HepG2 (cell line): ENCODE measurements at regions of chr16 and their contacts with region 1.

Region 1: GRCh38 chr16:69186642-69187445 is at the start of gene SNTB2:
- DNase-seq: peak; percentile 92
- ATAC-seq: peak; percentile 94
- H3K4me3 ChIP-seq: peak within 1 kb of the TSS; percentile 73 to 94 (median 88)
- H3K27ac ChIP-seq: peak within 1 kb of the TSS; percentile 71
- H3K4me1 ChIP-seq: peaks cover 49% of the 10 kb centered on the region
- H3K27me3 ChIP-seq: no peaks in the 10 kb centered on the region; a peak in 1 of 5 replicates
- CTCF ChIP-seq: no peak
- EP300 ChIP-seq: 0 out of 4 replicates have a peak, but pooled peaks of 1 of the 2 experiments have one; percentile 28
- POLR2A ChIP-seq: peak; percentile 89 to 96
- RAD21 ChIP-seq: peak; percentile 30; the same call in 1 of the 2 replicates
- total RNA-seq, gene SNTB2: 19.2 and 22.9 TPM in 2 replicates

Region 2: GRCh38 chr16:69132424-69133252 is 54.2 kb before region 1 on chr16 and contains the starts of genes CHTF8 and UTP4:
- CTCF ChIA-PET with region 1: no interaction called
- POLR2A ChIA-PET with region 1: interaction called, 11 read pairs
- in situ Hi-C with region 1: no loop called
- intact Hi-C with region 1: no loop called
- DNase-seq: peak; percentile 79
- ATAC-seq: peak; percentile 95
- H3K4me3 ChIP-seq: peak within 1 kb of the TSS; percentile 87 to 98 (median 91)
- H3K27ac ChIP-seq: peak within 1 kb of the TSS; percentile 97
- H3K4me1 ChIP-seq: peaks cover 50% of the 10 kb centered on the region
- H3K27me3 ChIP-seq: no peaks in the 10 kb centered on the region; a peak in 1 of 5 replicates
- CTCF ChIP-seq: no peak; the same call in 1 of the 2 replicates
- EP300 ChIP-seq: no peak; a peak in 2 of 4 replicates
- POLR2A ChIP-seq: peak in 1 of 2 experiments; percentile 94; a peak in 3 of 4 replicates
- RAD21 ChIP-seq: no peak; the same call in 1 of the 2 replicates
- total RNA-seq, gene CHTF8: 37.2 and 64.1 TPM in 2 replicates
- total RNA-seq, gene UTP4: 30.0 and 57.1 TPM in 2 replicates

Region 3: DNA sequence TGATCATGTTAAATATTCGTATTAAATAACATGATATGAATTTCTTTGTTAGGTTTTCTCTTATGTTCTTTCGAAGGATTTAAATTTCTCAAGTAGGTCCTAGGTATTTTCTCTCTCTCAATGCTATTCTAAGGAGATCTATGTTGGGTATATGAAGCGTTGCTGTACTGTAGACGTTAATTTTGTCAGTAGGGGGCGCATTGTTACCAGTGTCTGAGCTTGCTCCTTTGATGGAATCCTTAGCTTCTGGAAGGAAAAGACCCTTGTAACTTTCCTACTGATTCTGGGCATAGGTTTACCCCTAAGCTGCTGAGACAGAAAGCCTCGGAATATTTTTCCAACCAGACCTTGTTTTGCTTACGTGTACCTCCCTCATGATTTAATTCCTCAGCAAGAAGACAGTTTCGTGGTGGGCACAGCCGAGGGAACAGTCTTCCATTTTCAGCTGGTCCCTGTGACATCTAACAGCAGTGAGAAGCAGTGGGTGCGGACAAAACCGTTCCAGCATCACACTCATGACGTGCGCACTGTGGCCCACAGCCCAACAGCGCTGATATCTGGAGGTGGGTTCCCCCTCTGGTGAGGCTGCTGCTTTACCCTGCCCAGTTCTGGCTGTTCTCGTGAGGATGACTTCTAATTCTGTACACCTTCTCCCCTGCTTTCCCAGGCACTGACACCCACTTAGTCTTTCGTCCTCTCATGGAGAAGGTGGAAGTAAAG is 36.5 kb before region 1 on chr16:
- CTCF ChIA-PET with region 1: no interaction called
- POLR2A ChIA-PET with region 1: interaction called, 6 read pairs
- in situ Hi-C with region 1: no loop called
- intact Hi-C with region 1: loop called (anchors 5 kb)
- DNase-seq: peak; percentile 68
- ATAC-seq: peak; percentile 91
- H3K4me3 ChIP-seq: no peak overlapping the region
- H3K27ac ChIP-seq: no peak overlapping the region
- H3K4me1 ChIP-seq: no peaks in the 10 kb centered on the region
- H3K27me3 ChIP-seq: no peaks in the 10 kb centered on the region
- CTCF ChIP-seq: peak; percentile 84
- EP300 ChIP-seq: no peak
- POLR2A ChIP-seq: no peak
- RAD21 ChIP-seq: peak; percentile 72; the same call in 1 of the 2 replicates

Region 4: GRCh38 chr16:69166221-69166833 is 20.5 kb before region 1 on chr16:
- CTCF ChIA-PET with region 1: no interaction called
- POLR2A ChIA-PET with region 1: interaction called, 10 read pairs
- in situ Hi-C with region 1: no loop called
- intact Hi-C with region 1: no loop called
- DNase-seq: no peak
- ATAC-seq: no peak
- H3K4me3 ChIP-seq: no peak overlapping the region
- H3K27ac ChIP-seq: no peak overlapping the region
- H3K4me1 ChIP-seq: peaks cover 1% of the 10 kb centered on the region; the same call in 1 of the 2 replicates
- H3K27me3 ChIP-seq: no peaks in the 10 kb centered on the region
- CTCF ChIP-seq: no peak
- EP300 ChIP-seq: no peak
- POLR2A ChIP-seq: no peak
- RAD21 ChIP-seq: no peak

Region 5: DNA sequence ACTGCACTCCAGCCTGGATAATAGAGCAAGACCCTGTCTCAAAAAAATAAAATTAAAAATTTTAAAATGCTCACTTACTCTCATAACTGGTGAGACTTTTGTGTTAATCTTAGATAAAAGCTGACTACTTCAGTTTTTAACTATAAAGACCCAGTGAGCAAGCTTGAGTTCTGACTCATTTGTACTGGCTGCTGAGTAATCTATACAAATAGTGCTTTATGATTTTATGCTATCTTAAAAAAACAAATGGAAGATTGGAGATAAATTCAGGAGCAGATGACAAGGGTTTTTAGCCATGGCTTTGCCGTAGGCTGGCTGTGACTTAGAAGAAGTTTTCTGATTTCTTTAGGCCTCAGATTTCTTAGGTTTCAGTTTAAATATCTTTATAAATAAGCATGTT is 30.6 kb after region 1 on chr16:
- CTCF ChIA-PET with region 1: interaction called, 3 read pairs
- POLR2A ChIA-PET with region 1: interaction called, 14 read pairs
- in situ Hi-C with region 1: no loop called
- intact Hi-C with region 1: loop called (anchors 5 kb)
- DNase-seq: peak; percentile 42
- ATAC-seq: no peak
- H3K4me3 ChIP-seq: no peak overlapping the region
- H3K27ac ChIP-seq: no peak overlapping the region
- H3K4me1 ChIP-seq: peaks cover 41% of the 10 kb centered on the region
- H3K27me3 ChIP-seq: no peaks in the 10 kb centered on the region
- CTCF ChIP-seq: no peak
- EP300 ChIP-seq: no peak
- POLR2A ChIP-seq: no peak
- RAD21 ChIP-seq: no peak

Region 6: GRCh38 chr16:69223882-69224281 is 37.0 kb after region 1 on chr16:
- CTCF ChIA-PET with region 1: no interaction called
- POLR2A ChIA-PET with region 1: interaction called, 14 read pairs
- in situ Hi-C with region 1: no loop called
- intact Hi-C with region 1: loop called (anchors 5 kb)
- DNase-seq: no peak
- ATAC-seq: no peak
- H3K4me3 ChIP-seq: no peak overlapping the region
- H3K27ac ChIP-seq: no peak overlapping the region
- H3K4me1 ChIP-seq: peaks cover 28% of the 10 kb centered on the region
- H3K27me3 ChIP-seq: no peaks in the 10 kb centered on the region
- CTCF ChIP-seq: no peak
- EP300 ChIP-seq: no peak
- POLR2A ChIP-seq: no peak
- RAD21 ChIP-seq: no peak

Region 7: DNA sequence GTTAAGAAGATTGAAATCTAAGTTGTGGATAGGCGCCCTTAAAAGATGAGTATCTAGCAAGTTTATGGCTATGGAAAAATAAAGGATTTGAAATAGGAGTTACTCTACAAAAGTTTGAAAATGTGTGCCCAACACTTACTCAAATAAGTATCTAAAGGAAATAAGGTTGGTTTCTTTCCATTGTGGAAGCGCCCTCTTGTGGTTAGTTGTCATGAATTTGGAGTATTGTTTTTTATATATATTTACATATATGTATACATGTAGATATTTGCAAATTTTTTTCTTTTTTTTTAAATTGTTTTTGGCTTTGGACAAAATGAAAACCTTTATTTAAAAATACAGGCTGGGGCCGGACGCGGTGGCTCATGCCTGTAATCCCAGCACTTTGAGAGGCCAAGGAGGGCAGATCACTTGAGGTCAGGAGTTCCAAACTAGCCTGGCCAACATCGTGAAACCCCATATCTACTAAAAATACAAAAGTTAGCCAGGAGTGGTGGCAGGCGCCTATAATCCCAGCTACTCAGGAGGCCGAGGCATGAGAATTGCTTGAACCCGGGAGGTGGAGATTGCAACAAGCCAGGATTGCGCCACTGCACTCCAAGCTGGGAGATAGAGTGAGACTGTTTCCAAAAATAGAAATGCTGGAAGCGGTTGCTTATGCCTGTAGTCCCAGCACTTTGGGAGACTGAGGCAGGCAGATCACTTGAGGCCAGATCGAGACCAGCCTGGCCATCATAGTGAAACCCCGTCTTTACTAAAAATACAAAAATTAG is 100.3 kb after region 1 on chr16:
- CTCF ChIA-PET with region 1: no interaction called
- POLR2A ChIA-PET with region 1: interaction called, 3 read pairs
- in situ Hi-C with region 1: no loop called
- intact Hi-C with region 1: loop called (anchors 2 kb)
- DNase-seq: peak; percentile 62
- ATAC-seq: no peak
- H3K4me3 ChIP-seq: no peak overlapping the region
- H3K27ac ChIP-seq: no peak overlapping the region
- H3K4me1 ChIP-seq: peaks cover 8% of the 10 kb centered on the region; the same call in 1 of the 2 replicates
- H3K27me3 ChIP-seq: no peaks in the 10 kb centered on the region
- CTCF ChIP-seq: peak; percentile 55
- EP300 ChIP-seq: no peak
- POLR2A ChIP-seq: no peak
- RAD21 ChIP-seq: peak; percentile 29; the same call in 1 of the 2 replicates